ENCODE measurements at regions of chr5 and their contacts with region 1.

Region 1: GRCh38 chr5:10635257-10635866 is 71.5 kb downstream of the ANKRD33B start:
- DNase-seq: peak; percentile 81
- ATAC-seq: peak; percentile 60
- H3K4me3 ChIP-seq: peak overlapping the region in 2 of 5 experiments; percentile 5 to 33
- H3K4me3 Mint-ChIP-seq: peak overlapping the region; percentile 78
- H3K27ac ChIP-seq: peak overlapping the region; percentile 65 to 95
- H3K27ac Mint-ChIP-seq: peak overlapping the region; percentile 99
- H3K4me1 ChIP-seq: peaks cover 58 to 68% of the 10 kb centered on the region in 2 donors
- H3K4me1 Mint-ChIP-seq: peaks cover 66% of the 10 kb centered on the region
- H3K27me3 ChIP-seq: no peaks in the 10 kb centered on the region
- H3K27me3 Mint-ChIP-seq: no peaks in the 10 kb centered on the region
- CTCF ChIP-seq: no peak

Region 2: DNA sequence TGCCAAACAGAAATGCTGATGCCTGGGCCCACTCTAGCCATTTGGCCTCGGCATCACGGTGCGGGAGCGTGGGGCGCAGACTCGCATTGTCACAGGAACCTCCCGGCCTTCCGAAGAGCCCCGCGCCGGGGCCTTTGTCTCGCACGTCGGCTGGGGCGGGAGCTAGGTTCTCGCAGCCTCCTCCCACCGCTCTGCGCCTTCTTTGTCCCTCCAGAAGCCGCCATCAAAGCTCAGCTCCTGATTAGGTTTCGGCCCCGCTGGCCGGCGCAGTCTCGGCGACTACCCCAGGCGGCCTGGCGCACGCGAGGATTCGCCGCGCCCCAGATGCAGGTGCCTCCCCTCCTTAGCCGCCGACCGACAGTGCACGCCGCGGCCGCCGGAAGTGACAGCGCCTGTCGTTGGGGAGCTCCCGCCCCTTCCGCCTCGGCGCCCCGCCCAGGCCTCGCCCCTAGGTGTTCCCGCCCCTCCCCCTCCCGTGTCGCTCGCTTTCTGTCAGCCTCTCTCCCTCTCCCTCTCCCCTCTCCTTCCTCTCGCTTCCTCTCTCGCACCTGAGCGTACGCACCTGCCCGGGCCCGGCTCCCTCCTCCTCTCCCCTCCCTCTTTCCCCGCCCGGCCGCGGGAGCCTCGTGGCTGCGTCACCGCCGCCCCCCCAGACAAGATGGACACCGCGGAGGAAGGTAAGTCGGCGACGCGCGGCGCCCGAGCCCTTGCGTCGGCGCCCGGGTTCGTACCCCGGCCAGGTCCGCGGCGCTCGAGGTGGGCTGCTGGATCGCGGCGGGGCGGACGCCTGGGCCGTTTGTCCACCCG is 281.9 kb before region 1 on chr5 and contains the start of gene MARCHF6:
- CTCF ChIA-PET with region 1: no interaction called
- POLR2A ChIA-PET with region 1: no interaction called
- intact Hi-C with region 1: loop called (anchors 2 kb)
- DNase-seq: peak; percentile 97
- ATAC-seq: peak; percentile 82
- H3K4me3 ChIP-seq: peak within 1 kb of the TSS; percentile 64 to 96 (median 90)
- H3K4me3 Mint-ChIP-seq: peak within 1 kb of the TSS; percentile 94
- H3K27ac ChIP-seq: peak within 1 kb of the TSS; percentile 97 to 98
- H3K27ac Mint-ChIP-seq: peak within 1 kb of the TSS; percentile 96
- H3K4me1 ChIP-seq: peaks cover 30 to 33% of the 10 kb centered on the region in 2 donors
- H3K4me1 Mint-ChIP-seq: peaks cover 39% of the 10 kb centered on the region
- H3K27me3 ChIP-seq: no peaks in the 10 kb centered on the region
- H3K27me3 Mint-ChIP-seq: no peaks in the 10 kb centered on the region
- CTCF ChIP-seq: no peak
- total RNA-seq, gene MARCHF6: 199 and 201 TPM in 2 replicates

Region 3: GRCh38 chr5:10563945-10564837 is 71.2 kb before region 1 on chr5 and contains the start of gene ANKRD33B:
- CTCF ChIA-PET with region 1: interaction called, 27 read pairs
- POLR2A ChIA-PET with region 1: interaction called, 5 read pairs
- intact Hi-C with region 1: loop called (anchors 1 kb)
- DNase-seq: peak; percentile 91
- ATAC-seq: peak; percentile 74
- H3K4me3 ChIP-seq: peak within 1 kb of the TSS; percentile 64 to 84 (median 75)
- H3K4me3 Mint-ChIP-seq: peak within 1 kb of the TSS; percentile 93
- H3K27ac ChIP-seq: peak within 1 kb of the TSS; percentile 76 to 96
- H3K27ac Mint-ChIP-seq: peak within 1 kb of the TSS; percentile 90
- H3K4me1 ChIP-seq: peaks cover 42 to 51% of the 10 kb centered on the region in 2 donors
- H3K4me1 Mint-ChIP-seq: peaks cover 61% of the 10 kb centered on the region
- H3K27me3 ChIP-seq: no peaks in the 10 kb centered on the region
- H3K27me3 Mint-ChIP-seq: no peaks in the 10 kb centered on the region
- CTCF ChIP-seq: no peak
- total RNA-seq, gene ANKRD33B: 23.4 and 24.8 TPM in 2 replicates

Region 4: GRCh38 chr5:10607666-10608073 is 27.7 kb before region 1 on chr5:
- CTCF ChIA-PET with region 1: interaction called, 52 read pairs
- POLR2A ChIA-PET with region 1: interaction called, 5 read pairs
- intact Hi-C with region 1: loop called (anchors 1 kb)
- DNase-seq: peak; percentile 76
- ATAC-seq: peak; percentile 26
- H3K4me3 ChIP-seq: peak overlapping the region in 4 of 5 experiments; percentile 23 to 59 (median 40)
- H3K4me3 Mint-ChIP-seq: peak overlapping the region; percentile 82
- H3K27ac ChIP-seq: peak overlapping the region; percentile 45 to 73
- H3K27ac Mint-ChIP-seq: peak overlapping the region; percentile 86
- H3K4me1 ChIP-seq: peaks cover 25 to 30% of the 10 kb centered on the region in 2 donors
- H3K4me1 Mint-ChIP-seq: peaks cover 49% of the 10 kb centered on the region
- H3K27me3 ChIP-seq: no peaks in the 10 kb centered on the region
- H3K27me3 Mint-ChIP-seq: no peaks in the 10 kb centered on the region
- CTCF ChIP-seq: no peak

Region 5: DNA sequence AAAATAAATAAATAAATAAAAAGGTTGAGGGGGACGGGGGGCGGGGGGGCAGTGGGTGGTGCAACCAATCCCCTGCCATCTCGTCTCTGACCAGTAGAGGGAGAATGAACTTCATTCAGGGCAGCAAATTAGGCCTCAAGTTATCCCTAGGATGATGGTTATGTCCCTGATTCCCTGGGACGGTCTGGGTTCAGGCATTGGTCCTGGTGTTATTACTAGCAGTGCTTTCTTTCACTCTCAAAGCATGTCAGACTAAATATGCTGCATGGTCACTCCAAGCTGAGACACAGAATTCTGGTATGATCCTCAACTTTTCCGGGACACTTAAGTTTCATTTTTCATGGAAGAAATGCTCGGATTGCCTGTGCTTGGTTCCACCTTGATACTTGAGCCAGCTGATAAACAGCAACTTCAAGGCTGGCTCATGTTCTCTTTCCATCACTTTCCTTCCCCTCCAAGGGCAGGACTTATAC is 66.2 kb after region 1 on chr5:
- CTCF ChIA-PET with region 1: interaction called, 3 read pairs
- POLR2A ChIA-PET with region 1: no interaction called
- intact Hi-C with region 1: loop called (anchors 1 kb)
- DNase-seq: peak; percentile 56
- ATAC-seq: no peak
- H3K4me3 ChIP-seq: no peak overlapping the region
- H3K4me3 Mint-ChIP-seq: no peak overlapping the region
- H3K27ac ChIP-seq: no peak overlapping the region
- H3K27ac Mint-ChIP-seq: no peak overlapping the region
- H3K4me1 ChIP-seq: peaks cover 20 to 43% of the 10 kb centered on the region in 2 donors
- H3K4me1 Mint-ChIP-seq: peaks cover 47% of the 10 kb centered on the region
- H3K27me3 ChIP-seq: no peaks in the 10 kb centered on the region
- H3K27me3 Mint-ChIP-seq: no peaks in the 10 kb centered on the region
- CTCF ChIP-seq: peak; percentile 89